GM12878 (cell line): ENCODE measurements at regions of chr7 and their contacts with region 1.

Region 1: GRCh38 chr7:111138196-111138569 is 47.3 kb downstream of the LRRN3 start:
- DNase-seq: peak; percentile 72
- ATAC-seq: peak; percentile 98
- H3K4me3 ChIP-seq: peak overlapping the region; percentile 40; the same call in 1 of the 2 replicates
- H3K27ac ChIP-seq: peak overlapping the region; percentile 85
- H3K4me1 ChIP-seq: peaks cover 9% of the 10 kb centered on the region; the same call in 1 of the 2 replicates
- H3K27me3 ChIP-seq: no peaks in the 10 kb centered on the region
- CTCF ChIP-seq: no peak
- EP300 ChIP-seq: peak in 1 of 2 experiments; percentile 66; a peak in 2 of 4 replicates
- POLR2A ChIP-seq: no peak
- RAD21 ChIP-seq: no peak

Region 2: GRCh38 chr7:111089822-111090426 is 48.3 kb before region 1 on chr7:
- CTCF ChIA-PET with region 1: interaction called, 11 read pairs
- POLR2A ChIA-PET with region 1: no interaction called
- RAD21 ChIA-PET with region 1: interaction called, 8 read pairs
- SMC1A ChIA-PET with region 1: interaction called, 11 read pairs
- in situ Hi-C with region 1: no loop called
- intact Hi-C with region 1: no loop called
- DNase-seq: no peak
- ATAC-seq: peak; percentile 71
- H3K4me3 ChIP-seq: no peak overlapping the region
- H3K27ac ChIP-seq: no peak overlapping the region
- H3K4me1 ChIP-seq: peaks cover 17% of the 10 kb centered on the region
- H3K27me3 ChIP-seq: no peaks in the 10 kb centered on the region
- CTCF ChIP-seq: peak; percentile 62 to 71 (median 68); a peak in 5 of 6 replicates
- EP300 ChIP-seq: no peak
- POLR2A ChIP-seq: no peak
- RAD21 ChIP-seq: peak; percentile 79

Region 3: DNA sequence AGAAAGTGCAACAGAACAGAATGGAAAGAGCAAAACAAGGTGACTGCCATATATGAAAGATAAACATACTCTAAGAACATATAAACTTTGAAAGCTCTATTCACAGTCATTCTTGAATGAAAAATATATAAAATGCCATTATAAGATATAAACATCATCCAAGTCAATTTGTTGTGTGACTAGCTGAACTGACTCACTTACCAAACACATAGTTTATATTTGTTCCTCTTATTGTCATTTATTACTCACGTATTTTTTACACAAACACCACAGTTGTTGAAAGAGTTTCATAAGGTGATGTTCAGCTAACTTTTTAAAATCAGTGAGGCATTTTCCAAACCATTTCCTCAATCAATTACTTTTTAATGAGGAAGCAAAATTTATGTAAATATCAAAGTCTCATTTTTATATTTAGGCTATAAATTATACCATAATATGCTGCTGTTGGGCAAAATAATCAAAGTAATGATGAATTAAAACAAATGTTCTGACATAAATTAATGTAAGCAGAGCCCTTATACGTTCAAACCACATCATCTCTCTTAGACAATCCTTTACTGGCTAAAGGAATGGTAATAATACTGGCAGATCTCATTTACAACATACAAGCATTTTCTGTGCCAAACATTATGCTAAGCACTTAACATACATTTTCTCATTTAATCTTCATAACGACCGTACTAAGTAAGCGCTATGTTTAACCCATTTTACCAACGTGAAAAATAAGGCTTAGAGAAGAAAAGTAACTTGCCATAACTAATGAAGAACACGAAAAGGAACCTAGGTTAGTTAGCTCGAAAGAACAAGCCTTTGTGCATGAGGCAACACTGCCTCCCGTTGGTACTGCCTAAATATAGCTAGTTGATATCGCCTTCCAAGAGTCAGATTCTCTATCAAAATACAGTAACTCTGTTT is 39.9 kb before region 1 on chr7:
- CTCF ChIA-PET with region 1: interaction called, 9 read pairs
- POLR2A ChIA-PET with region 1: no interaction called
- RAD21 ChIA-PET with region 1: interaction called, 21 read pairs
- SMC1A ChIA-PET with region 1: interaction called, 24 read pairs
- in situ Hi-C with region 1: no loop called
- intact Hi-C with region 1: no loop called
- DNase-seq: no peak
- ATAC-seq: peak; percentile 68
- H3K4me3 ChIP-seq: no peak overlapping the region
- H3K27ac ChIP-seq: no peak overlapping the region
- H3K4me1 ChIP-seq: no peaks in the 10 kb centered on the region
- H3K27me3 ChIP-seq: no peaks in the 10 kb centered on the region
- CTCF ChIP-seq: peak; percentile 58 to 71 (median 60)
- EP300 ChIP-seq: no peak
- POLR2A ChIP-seq: no peak
- RAD21 ChIP-seq: peak; percentile 66

Region 4: DNA sequence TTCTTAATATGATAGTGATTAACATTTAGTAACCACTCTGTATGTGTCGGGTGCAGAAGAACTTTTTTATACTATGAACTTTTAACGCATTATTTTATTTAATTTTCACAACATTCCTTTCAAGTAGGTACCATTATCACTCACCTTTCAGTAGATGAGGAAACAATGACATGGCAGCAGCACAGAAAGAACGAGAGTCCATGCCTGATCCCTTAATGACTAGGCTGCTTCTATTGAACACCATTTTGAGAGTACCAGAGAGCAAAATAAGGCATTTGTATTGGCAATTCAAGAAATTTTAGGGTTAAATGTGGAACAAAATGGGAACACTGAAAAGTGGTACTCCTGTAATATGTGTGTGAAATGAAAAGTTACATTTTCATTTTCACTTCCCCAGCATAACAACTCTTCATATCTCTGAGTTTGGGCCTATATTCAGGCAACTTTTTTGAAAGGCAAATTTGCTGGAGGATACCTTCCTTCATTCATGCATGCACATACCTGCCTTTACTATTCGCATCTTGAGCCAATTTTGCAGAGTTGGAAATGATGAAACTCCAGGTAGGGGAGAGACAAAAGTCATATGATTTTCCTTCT is 34.4 kb before region 1 on chr7:
- CTCF ChIA-PET with region 1: interaction called, 9 read pairs
- POLR2A ChIA-PET with region 1: interaction called, 5 read pairs
- RAD21 ChIA-PET with region 1: interaction called, 21 read pairs
- SMC1A ChIA-PET with region 1: interaction called, 24 read pairs
- in situ Hi-C with region 1: no loop called
- intact Hi-C with region 1: no loop called
- DNase-seq: no peak
- ATAC-seq: peak; percentile 77
- H3K4me3 ChIP-seq: no peak overlapping the region
- H3K27ac ChIP-seq: peak overlapping the region; percentile 24; the same call in 1 of the 2 replicates
- H3K4me1 ChIP-seq: peaks cover 11% of the 10 kb centered on the region
- H3K27me3 ChIP-seq: no peaks in the 10 kb centered on the region
- CTCF ChIP-seq: no peak
- EP300 ChIP-seq: 0 out of 4 replicates have a peak, but pooled peaks of 1 of the 2 experiments have one; percentile 19
- POLR2A ChIP-seq: no peak
- RAD21 ChIP-seq: no peak

Region 5: GRCh38 chr7:111113263-111114017 is 24.7 kb before region 1 on chr7:
- CTCF ChIA-PET with region 1: interaction called, 4 read pairs
- POLR2A ChIA-PET with region 1: interaction called, 3 read pairs
- RAD21 ChIA-PET with region 1: interaction called, 10 read pairs
- SMC1A ChIA-PET with region 1: interaction called, 22 read pairs
- in situ Hi-C with region 1: no loop called
- intact Hi-C with region 1: no loop called
- DNase-seq: no peak
- ATAC-seq: peak; percentile 86
- H3K4me3 ChIP-seq: no peak overlapping the region
- H3K27ac ChIP-seq: no peak overlapping the region
- H3K4me1 ChIP-seq: no peaks in the 10 kb centered on the region
- H3K27me3 ChIP-seq: no peaks in the 10 kb centered on the region
- CTCF ChIP-seq: no peak
- EP300 ChIP-seq: no peak
- POLR2A ChIP-seq: no peak
- RAD21 ChIP-seq: no peak

Region 6: GRCh38 chr7:111126987-111127386 is 11.2 kb before region 1 on chr7:
- CTCF ChIA-PET with region 1: interaction called, 3 read pairs
- POLR2A ChIA-PET with region 1: no interaction called
- RAD21 ChIA-PET with region 1: interaction called, 5 read pairs
- SMC1A ChIA-PET with region 1: interaction called, 25 read pairs
- in situ Hi-C with region 1: no loop called
- intact Hi-C with region 1: no loop called
- DNase-seq: no peak
- ATAC-seq: no peak
- H3K4me3 ChIP-seq: no peak overlapping the region
- H3K27ac ChIP-seq: no peak overlapping the region
- H3K4me1 ChIP-seq: no peaks in the 10 kb centered on the region
- H3K27me3 ChIP-seq: no peaks in the 10 kb centered on the region
- CTCF ChIP-seq: no peak
- EP300 ChIP-seq: no peak
- POLR2A ChIP-seq: no peak
- RAD21 ChIP-seq: no peak